Right ventricle myocardium inferior (tissue), 1 donor: ENCODE measurements at regions of chr10 and their contacts with region 1.

Region 1: DNA sequence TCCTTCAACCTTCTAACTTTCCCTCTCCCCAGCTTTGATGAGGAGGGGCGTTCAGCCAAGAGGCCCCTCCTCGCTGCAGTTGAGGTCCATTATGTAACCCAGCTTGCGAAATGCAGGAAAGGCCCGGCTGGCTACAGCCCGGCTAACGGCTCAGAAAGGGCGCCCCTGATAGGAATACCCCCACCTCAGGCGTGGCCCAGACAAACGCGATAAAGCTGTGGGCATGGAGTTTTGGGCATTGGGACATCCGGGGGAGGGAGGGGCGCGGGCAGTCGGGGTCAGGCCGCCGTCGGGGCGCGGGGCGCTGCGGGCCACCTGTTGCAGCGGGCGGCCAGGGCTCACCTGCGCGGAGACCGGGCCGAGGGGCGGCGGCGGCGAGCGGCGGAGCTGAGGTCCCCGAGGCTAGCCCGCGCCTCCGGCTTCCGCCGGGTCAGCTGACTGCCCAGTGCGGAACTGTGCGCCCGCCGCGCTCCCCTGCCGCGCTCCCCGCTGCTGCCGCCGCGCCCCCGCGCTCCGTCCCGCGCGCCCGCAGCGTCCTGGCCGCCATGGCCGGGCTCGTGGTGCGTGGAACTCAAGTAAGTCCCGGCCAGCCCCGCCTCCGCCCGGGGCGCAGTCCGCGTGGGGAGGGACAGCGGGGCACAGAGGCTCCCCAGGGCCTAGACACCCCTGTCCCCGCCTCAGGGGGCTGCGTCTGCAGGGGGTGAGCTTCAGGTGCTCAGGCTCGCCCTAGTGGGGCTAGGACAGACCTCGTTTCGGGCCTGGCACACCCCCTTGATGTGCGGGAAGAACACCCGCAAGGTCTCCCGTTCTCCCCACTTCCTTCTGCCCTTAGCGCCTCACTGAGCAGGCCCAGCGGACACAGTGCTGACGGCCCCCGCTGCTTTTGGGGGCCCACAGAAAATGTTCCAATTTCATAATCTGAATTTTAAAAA is at the start of gene LRMDA:
- DNase-seq: peak; percentile 85
- ATAC-seq: peak; percentile 75
- total RNA-seq, gene LRMDA: 22.3 TPM

Region 2: DNA sequence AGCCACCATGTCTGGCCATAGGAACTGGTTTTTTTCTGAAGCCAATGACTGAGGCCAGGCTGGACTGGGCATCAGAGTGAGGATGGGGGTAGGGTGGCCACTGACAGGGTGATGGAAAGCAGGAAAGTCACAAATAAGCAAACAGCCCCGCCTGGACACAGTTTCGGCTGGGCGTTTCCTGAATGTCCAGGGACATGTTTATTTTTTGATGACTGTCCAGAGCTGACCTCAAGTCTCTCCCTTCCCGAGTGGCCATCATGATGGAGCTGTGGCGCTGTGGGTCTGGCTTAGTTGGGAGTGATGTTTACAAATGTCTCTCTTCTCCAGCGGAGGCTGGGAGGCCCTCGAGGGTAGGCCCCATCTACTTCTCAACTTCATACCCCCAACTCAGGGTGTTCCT is 158.6 kb before region 1 on chr10:
- intact Hi-C with region 1: no loop called
- DNase-seq: peak; percentile 53
- ATAC-seq: peak; percentile 20

Region 3: DNA sequence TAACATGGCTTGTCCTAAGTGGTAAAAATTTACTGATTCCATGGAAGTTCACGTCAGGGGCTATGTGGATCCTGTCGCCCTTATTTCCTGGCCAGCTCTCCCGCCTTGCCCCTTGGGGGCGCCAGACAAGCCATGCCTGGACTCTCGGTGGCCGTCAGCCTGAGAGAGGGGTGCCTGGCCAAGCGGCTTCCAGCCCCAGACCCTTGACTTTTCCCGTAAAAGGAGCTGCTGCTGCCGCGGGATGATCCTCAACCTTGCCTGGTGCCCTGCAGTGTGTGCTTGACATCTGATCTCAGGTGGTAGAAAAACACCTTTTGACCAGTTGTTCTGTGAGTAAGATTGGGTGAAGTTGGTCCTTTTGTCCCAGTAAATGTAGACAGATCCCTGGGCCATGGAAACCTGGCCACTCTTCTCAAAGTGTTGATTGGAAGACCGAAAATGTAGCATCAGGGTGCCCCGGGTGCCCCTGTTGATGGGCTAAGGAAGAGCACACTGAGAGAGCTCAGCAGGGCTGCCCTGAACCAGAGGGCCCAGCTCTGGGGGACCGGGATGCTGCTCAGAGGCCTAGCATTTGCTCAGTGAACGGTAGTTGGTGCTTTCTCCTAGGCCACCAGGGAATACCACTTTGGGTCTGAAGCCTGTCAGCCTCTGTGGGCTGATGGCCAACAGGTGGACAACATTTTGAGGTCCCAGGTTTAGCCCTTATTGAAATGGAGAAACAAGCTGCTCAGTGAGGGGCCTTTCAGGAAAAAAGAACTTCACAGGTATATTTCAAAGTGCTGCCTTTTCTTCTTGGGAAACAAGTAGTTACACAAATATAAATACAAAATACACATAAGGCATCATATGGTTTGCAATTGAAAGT is 162.5 kb after region 1 on chr10:
- intact Hi-C with region 1: loop called (anchors 10 kb)
- DNase-seq: no peak
- ATAC-seq: no peak